GM10248 (cell line): ENCODE measurements at regions of chr7 and their contacts with region 1.

Region 1: DNA sequence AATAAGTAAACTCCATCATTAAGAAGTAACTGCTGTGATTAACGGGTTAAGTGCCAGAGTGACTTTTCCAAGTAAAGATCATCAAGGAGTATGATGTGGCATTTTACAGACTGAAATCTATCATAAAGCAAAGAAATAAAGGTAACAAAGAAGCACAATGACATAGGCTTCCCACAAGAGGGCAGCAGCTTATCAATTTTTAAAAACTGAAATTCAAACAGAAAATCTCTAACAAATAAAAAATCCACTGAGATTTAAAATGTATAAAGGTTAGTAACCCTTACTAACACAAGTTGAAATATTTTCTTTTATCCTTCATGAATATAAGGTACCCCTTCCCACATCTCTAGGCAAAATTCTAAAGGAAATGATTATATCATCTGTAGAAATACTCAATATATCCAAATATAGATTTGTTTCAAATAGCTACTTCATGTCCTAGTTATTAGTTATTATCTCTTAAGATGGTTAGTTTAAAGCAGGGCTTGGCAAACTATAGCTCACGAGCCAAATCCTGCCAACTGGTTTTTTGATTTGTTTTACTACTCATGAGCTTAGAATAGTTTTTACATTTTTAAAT is 29.2 kb downstream of the FAM3C start:
- DNase-seq: peak; percentile 28
- CTCF ChIP-seq: peak; percentile 51

Region 2: GRCh38 chr7:121235201-121235600 is 131.7 kb before region 1 on chr7:
- CTCF ChIA-PET with region 1: no interaction called
- POLR2A ChIA-PET with region 1: no interaction called
- DNase-seq: no peak
- CTCF ChIP-seq: no peak

Region 3: DNA sequence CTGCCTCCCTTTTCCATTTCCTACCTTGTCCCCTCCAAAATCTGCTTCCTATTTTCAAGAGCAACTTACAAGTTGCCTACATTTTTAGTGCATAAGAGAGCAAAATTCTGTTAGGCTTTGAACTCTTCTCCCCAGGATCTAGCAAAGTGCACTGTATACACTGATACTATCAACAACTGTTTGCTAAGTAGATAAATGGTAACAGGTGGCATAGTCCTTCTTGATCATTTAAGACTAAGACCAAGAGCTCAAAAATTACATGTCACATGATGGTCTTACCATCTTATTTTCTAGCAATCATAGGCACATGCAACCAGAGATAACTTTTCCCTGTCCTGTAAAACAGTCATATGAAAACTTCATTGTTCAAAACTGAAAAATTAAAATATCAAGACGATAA is 13.0 kb after region 1 on chr7:
- CTCF ChIA-PET with region 1: interaction called, 61 read pairs
- POLR2A ChIA-PET with region 1: no interaction called
- DNase-seq: no peak
- CTCF ChIP-seq: no peak

Region 4: DNA sequence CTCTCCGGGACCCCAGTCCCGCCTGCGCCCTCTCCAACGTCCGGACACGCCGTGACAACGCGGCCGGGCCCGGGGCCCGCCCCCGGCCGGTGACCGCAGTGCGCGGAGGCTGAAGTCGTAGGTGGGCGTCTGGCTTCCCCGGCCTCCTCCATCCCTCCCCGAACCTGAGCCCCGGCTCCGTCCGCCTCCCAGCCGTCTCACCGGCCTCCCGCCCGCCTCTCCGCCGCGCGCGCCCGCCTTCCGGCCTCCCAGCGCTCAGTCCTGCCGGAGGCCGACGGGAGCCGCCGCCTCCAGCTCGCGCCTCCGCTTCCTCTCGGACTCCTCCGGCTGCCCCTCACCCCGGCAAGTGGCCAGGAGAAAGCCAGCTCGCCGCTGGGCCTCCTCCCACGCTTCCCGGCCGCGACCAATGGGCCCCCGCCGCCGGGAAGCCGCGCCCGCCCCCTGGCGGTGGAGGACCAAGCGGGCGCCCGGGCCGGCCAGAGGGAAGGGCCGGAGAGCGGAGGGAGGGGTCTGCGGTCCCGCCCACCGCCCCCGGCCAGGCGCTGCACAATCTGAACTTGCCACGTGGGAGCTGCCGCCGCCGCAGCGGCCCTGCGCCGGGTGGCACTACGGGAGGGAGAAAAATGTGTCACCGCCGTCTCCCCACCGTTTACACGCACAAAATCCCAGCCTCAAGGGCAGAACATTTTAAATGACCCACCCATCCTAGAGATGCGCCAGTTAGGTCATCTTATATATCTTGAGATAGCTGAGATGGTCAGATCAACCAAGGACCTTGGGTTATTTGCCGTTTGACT is 29.2 kb after region 1 on chr7 and contains the start of gene FAM3C:
- CTCF ChIA-PET with region 1: interaction called, 157 read pairs
- POLR2A ChIA-PET with region 1: interaction called, 7 read pairs
- DNase-seq: peak; percentile 93
- CTCF ChIP-seq: peak; percentile 82

Region 5: DNA sequence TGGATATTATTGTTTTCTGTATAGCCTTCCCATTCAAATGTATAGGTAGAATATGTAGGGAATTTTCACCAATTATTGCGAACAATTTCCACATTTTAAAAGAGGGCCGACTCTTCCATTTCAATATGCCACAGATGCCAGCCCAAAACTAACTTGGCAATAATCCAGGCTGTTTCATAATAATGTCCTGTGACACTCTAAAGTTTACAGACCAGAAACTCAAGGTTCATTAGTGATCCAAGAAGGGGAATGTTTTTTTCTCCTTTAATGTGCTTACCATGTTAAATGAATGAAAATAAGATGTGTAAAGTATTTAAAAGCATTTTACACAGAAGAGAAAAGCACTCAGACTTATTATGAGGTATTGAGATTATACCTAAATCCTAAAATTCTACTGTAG is 92.2 kb after region 1 on chr7:
- CTCF ChIA-PET with region 1: no interaction called
- POLR2A ChIA-PET with region 1: no interaction called
- DNase-seq: no peak
- CTCF ChIP-seq: no peak

Region 6: DNA sequence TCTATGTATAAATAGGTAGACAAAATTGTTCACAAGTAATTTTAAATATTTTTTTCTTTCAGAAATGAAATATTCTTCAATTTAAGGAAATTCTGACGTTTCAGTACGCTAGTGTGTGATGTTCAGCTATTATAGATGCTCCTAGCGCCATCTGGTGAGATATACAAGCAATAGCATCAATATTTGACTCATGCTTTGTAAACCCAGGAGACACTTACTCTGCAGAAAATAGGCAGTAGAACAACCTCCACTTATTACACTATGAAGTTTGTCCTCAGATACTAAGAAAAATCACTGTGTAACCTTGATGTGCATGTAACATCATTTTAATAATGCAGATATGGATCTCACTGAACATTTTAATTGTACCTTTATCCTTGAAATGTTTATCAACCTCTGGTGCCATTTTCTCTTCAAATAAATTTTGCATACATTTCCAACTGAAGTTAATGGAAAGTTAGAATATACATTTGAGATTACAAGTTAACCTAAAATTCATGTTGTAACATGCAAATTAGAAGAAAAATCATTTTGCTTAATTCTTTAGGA is 180.7 kb after region 1 on chr7:
- CTCF ChIA-PET with region 1: interaction called, 70 read pairs
- POLR2A ChIA-PET with region 1: no interaction called
- DNase-seq: peak; percentile 51
- CTCF ChIP-seq: peak; percentile 71